ENCODE measurements at regions of chr17 and their contacts with region 1.

Region 1: DNA sequence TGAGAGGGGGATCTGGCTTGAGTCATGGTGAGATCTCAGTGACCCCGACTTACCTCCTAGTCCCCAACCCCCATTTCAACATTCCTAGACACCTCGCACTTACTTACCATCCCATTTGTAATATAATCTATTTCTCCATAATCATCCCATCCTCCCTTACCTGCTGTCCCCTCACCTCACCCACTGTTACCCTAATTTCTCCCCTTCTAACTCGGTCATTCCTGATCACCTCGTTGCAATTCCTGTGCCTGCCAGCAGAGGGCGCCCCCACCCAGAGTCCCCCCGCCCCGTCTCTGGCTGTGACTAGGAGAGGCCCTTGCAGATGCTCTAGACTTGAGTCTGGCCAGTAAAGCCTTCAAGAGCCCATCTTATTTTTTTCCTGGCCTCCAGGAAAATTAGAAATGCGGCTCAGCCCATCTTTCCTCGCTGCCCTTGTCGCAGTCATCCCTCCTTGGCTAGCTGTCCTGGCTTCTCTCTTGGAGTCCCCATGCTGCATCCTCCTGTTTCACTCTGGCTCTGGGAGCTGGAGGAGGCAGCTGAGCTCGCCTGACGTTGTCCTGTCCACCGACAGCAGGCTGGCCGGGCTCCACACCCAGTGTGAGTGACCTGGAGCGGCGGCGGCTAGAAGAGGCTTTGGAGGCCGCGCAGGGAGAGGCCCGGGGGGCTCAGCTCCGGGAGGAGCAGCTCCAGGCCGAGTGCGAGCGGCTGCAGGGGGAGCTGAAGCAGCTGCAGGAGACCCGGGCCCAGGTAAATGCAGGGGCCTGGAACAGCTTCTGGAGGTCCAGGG is 5.0 kb downstream of the TBKBP1 start:
- DNase-seq: peak; percentile 91
- ATAC-seq: peak; percentile 37
- H3K4me3 Mint-ChIP-seq: no peak overlapping the region
- H3K27ac Mint-ChIP-seq: peak overlapping the region; percentile 35
- H3K4me1 Mint-ChIP-seq: peaks cover 78% of the 10 kb centered on the region
- H3K27me3 Mint-ChIP-seq: no peaks in the 10 kb centered on the region

Region 2: GRCh38 chr17:47663912-47664625 is 34.9 kb before region 1 on chr17:
- CTCF ChIA-PET with region 1: interaction called, 15 read pairs
- POLR2A ChIA-PET with region 1: no interaction called
- intact Hi-C with region 1: loop called in 1 of 2 experiments (anchors 5 kb)
- DNase-seq: peak; percentile 73
- ATAC-seq: peak; percentile 65
- H3K4me3 Mint-ChIP-seq: no peak overlapping the region
- H3K27ac Mint-ChIP-seq: peak overlapping the region; percentile 83
- H3K4me1 Mint-ChIP-seq: peaks cover 28% of the 10 kb centered on the region
- H3K27me3 Mint-ChIP-seq: no peaks in the 10 kb centered on the region

Region 3: GRCh38 chr17:47687748-47688147 is 11.2 kb before region 1 on chr17:
- CTCF ChIA-PET with region 1: interaction called, 17 read pairs
- POLR2A ChIA-PET with region 1: interaction called, 6 read pairs
- intact Hi-C with region 1: no loop called
- DNase-seq: no peak
- ATAC-seq: peak; percentile 18
- H3K4me3 Mint-ChIP-seq: no peak overlapping the region
- H3K27ac Mint-ChIP-seq: no peak overlapping the region
- H3K4me1 Mint-ChIP-seq: peaks cover 27% of the 10 kb centered on the region
- H3K27me3 Mint-ChIP-seq: no peaks in the 10 kb centered on the region

Region 4: DNA sequence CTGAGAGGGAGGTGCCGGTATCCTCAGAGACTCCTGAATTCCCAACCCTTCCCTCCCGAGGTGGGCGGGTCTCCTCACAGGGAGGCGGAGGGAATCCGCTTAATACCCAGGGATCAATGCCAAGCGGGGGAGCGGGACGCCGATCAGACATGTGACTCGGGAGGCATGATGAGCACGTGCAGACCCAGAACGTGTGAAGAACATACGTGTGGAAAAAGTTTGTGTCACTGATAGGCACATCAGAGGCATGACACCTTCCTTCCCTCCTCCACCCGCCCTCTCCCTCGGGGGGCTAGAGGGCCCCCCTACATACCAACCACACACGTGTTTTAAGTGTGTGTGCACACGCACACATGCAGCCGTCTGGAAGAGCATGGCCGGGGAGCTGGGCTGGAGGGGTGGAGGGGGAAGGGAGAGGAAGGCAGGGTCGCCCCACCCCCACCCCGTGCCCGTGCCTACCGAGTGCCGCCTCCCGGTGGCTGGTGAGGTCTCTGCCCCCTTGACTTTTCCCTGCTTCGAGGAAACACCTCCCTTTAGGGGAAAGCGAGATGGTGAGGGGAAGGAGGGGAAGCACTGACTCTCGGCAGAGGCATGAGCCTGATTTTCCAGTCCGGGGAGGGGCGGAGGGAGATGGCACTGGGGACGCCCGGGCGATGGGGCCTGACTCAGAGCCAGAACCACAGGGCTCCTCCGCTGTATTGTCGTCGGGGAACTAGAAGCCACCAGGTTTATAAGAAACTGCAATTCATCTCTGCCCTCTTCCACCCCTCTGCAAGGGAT is 22.0 kb after region 1 on chr17:
- CTCF ChIA-PET with region 1: interaction called, 117 read pairs
- POLR2A ChIA-PET with region 1: interaction called, 5 read pairs
- intact Hi-C with region 1: loop called (anchors 1 kb)
- DNase-seq: peak; percentile 99
- ATAC-seq: peak; percentile 71
- H3K4me3 Mint-ChIP-seq: peak overlapping the region; percentile 69
- H3K27ac Mint-ChIP-seq: peak overlapping the region; percentile 98
- H3K4me1 Mint-ChIP-seq: peaks cover 97% of the 10 kb centered on the region
- H3K27me3 Mint-ChIP-seq: no peaks in the 10 kb centered on the region

Region 5: GRCh38 chr17:47742319-47743181 is 43.6 kb after region 1 on chr17:
- CTCF ChIA-PET with region 1: interaction called, 112 read pairs
- POLR2A ChIA-PET with region 1: interaction called, 3 read pairs
- intact Hi-C with region 1: loop called in 1 of 2 experiments (anchors 1 kb)
- DNase-seq: peak; percentile 67
- ATAC-seq: no peak
- H3K4me3 Mint-ChIP-seq: no peak overlapping the region
- H3K27ac Mint-ChIP-seq: peak overlapping the region; percentile 13
- H3K4me1 Mint-ChIP-seq: peaks cover 44% of the 10 kb centered on the region
- H3K27me3 Mint-ChIP-seq: no peaks in the 10 kb centered on the region

Region 6: GRCh38 chr17:47802341-47803022 is 103.5 kb after region 1 on chr17:
- CTCF ChIA-PET with region 1: interaction called, 3 read pairs
- POLR2A ChIA-PET with region 1: no interaction called
- intact Hi-C with region 1: loop called (anchors 2 kb)
- DNase-seq: peak; percentile 81
- ATAC-seq: peak; percentile 98
- H3K4me3 Mint-ChIP-seq: no peak overlapping the region
- H3K27ac Mint-ChIP-seq: no peak overlapping the region
- H3K4me1 Mint-ChIP-seq: no peaks in the 10 kb centered on the region
- H3K27me3 Mint-ChIP-seq: peaks cover 2% of the 10 kb centered on the region

Measured in activated CD4-positive, alpha-beta T cell treated with anti-CD3 and anti-CD28 coated beads for 36 hours (primary cell).